ENCODE measurements at regions of chr19 and their contacts with region 1.

Region 1: DNA sequence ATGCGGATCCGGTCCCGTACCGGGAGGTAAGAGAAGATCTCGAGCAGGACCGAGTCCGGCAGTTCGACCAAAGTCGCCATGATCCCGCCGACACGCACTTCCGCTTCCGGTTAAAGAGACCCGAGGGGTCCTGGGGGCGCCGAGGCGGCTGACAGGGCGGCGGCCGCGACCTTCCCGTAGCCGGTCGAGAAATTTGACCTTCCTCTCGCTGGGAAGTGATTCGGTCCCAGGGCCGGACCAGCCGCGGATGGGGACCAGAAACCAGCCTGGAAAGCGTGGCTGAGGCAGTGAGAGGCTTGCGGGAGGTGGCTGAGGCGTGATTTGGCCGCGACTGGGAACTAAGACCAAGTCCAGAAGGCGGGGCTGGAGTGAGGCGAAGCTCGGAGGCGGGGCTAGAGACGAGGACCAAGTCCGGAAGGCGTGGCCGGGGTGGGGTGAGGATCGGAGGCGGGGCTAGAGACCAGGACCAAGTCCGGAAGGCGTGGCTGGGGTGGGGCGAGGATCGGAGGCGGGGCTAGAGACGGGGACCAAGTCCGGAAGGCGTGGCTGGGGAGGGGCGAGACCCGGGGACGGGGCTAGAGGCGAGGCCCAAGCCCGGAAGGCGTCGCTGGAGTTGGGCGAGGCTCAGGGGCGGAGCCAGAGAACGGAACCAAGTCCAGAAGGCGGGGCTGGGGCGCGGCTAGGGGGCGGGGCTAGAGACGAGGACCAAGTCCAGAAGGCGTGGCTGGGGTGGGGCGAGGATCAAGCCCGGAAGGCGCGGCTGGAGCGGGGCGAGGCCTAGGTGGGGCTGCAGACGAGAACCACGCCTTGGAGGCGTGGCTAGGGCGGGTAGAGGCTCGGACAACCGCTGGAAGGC is at the start of gene FBXL12:
- H3K4me3 Mint-ChIP-seq: peak within 1 kb of the TSS; percentile 94
- H3K27ac Mint-ChIP-seq: peak within 1 kb of the TSS; percentile 97
- H3K4me1 Mint-ChIP-seq: peaks cover 30% of the 10 kb centered on the region
- H3K27me3 Mint-ChIP-seq: no peaks in the 10 kb centered on the region

Region 2: DNA sequence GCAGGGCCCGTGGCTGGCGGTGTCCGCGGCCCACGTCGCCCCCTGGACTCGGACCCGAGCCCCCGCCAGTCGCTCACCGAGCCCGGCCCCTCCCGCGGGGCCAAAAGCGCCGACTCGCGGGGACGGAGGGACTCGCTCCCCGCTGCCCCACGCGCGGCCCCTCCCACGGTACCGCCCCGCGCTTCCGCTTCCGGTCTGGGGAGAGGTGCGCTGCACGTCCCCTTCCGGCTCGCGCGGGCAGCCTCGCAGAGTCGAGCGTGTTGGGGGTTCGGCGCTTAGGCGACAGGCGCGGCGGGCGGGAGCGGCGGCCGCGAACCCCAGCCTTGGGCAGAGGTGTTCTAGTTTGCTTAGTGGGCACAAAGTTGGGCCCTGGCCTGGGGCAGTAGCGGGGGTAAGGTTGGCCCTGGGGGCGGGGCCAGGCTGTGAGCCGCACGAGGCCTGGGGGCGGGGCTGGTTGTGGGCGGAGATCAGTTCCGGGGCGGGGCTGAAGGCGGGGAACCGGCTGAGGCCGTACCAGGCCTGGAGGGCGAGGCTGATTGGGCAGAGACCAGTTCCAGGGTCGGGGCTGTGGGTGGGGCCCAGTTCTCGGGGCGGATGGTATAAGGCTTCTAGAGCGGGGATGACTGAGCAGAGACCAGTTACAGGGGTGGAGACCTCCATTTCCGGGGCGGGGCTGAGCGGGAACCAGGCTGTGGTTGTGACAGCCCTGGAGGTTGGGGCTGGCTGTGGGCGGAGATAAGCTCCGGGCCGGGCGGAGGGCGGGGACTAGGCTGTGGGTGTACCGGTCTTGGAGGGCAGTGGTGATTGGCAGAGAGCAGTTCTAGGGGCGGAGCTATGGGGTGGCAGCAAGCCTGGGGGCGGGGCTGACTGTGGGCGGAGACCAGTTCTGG is 986.6 kb before region 1 on chr19 and contains the starts of genes MBD3L1 and ZNF558:
- intact Hi-C with region 1: loop called (anchors 5 kb)
- H3K4me3 Mint-ChIP-seq: peak within 1 kb of the TSS; percentile 92
- H3K27ac Mint-ChIP-seq: peak within 1 kb of the TSS; percentile 97
- H3K4me1 Mint-ChIP-seq: peaks cover 28% of the 10 kb centered on the region
- H3K27me3 Mint-ChIP-seq: peaks cover 1% of the 10 kb centered on the region

Region 3: GRCh38 chr19:9785367-9786331 is 33.3 kb before region 1 on chr19:
- intact Hi-C with region 1: loop called (anchors 1 kb)
- H3K4me3 Mint-ChIP-seq: peak overlapping the region; percentile 80
- H3K27ac Mint-ChIP-seq: peak overlapping the region; percentile 96
- H3K4me1 Mint-ChIP-seq: peaks cover 40% of the 10 kb centered on the region
- H3K27me3 Mint-ChIP-seq: no peaks in the 10 kb centered on the region

Region 4: GRCh38 chr19:9801976-9802375 is 17.0 kb before region 1 on chr19:
- intact Hi-C with region 1: no loop called
- H3K4me3 Mint-ChIP-seq: no peak overlapping the region
- H3K27ac Mint-ChIP-seq: no peak overlapping the region
- H3K4me1 Mint-ChIP-seq: peaks cover 6% of the 10 kb centered on the region
- H3K27me3 Mint-ChIP-seq: no peaks in the 10 kb centered on the region

Measured in dendritic cell treated with granulocyte-macrophage colony-stimulating factor and Interleukin-4, amounts not matched to agents 40 ng/mL and 50 ng/mL, for 4 days (primary cell).